PC-9 (cell line): ENCODE measurements at regions of chr12 and their contacts with region 1.

Region 1: GRCh38 chr12:47837190-47838171 is 17.8 kb upstream of the HDAC7 start:
- DNase-seq: peak; percentile 56 to 70
- H3K4me3 ChIP-seq: no peak overlapping the region
- H3K27ac ChIP-seq: no peak overlapping the region
- H3K4me1 ChIP-seq: peaks cover 35% of the 10 kb centered on the region
- H3K27me3 ChIP-seq: no peaks in the 10 kb centered on the region
- CTCF ChIP-seq: peak; percentile 97

Region 2: GRCh38 chr12:47742253-47742825 is 95.1 kb before region 1 on chr12:
- CTCF ChIA-PET with region 1: interaction called, 31 read pairs
- POLR2A ChIA-PET with region 1: no interaction called
- intact Hi-C with region 1: loop called (anchors 1 kb)
- DNase-seq: peak in 1 of 2 experiments; percentile 66
- H3K4me3 ChIP-seq: no peak overlapping the region
- H3K27ac ChIP-seq: no peak overlapping the region
- H3K4me1 ChIP-seq: peaks cover 8% of the 10 kb centered on the region
- H3K27me3 ChIP-seq: no peaks in the 10 kb centered on the region
- CTCF ChIP-seq: peak; percentile 100

Region 3: GRCh38 chr12:47779301-47779942 is 58.1 kb before region 1 on chr12:
- CTCF ChIA-PET with region 1: interaction called, 15 read pairs
- POLR2A ChIA-PET with region 1: interaction called, 7 read pairs
- intact Hi-C with region 1: loop called (anchors 1 kb)
- DNase-seq: peak; percentile 76 to 87
- H3K4me3 ChIP-seq: no peak overlapping the region
- H3K27ac ChIP-seq: no peak overlapping the region
- H3K4me1 ChIP-seq: peaks cover 62% of the 10 kb centered on the region
- H3K27me3 ChIP-seq: no peaks in the 10 kb centered on the region
- CTCF ChIP-seq: peak; percentile 96

Region 4: DNA sequence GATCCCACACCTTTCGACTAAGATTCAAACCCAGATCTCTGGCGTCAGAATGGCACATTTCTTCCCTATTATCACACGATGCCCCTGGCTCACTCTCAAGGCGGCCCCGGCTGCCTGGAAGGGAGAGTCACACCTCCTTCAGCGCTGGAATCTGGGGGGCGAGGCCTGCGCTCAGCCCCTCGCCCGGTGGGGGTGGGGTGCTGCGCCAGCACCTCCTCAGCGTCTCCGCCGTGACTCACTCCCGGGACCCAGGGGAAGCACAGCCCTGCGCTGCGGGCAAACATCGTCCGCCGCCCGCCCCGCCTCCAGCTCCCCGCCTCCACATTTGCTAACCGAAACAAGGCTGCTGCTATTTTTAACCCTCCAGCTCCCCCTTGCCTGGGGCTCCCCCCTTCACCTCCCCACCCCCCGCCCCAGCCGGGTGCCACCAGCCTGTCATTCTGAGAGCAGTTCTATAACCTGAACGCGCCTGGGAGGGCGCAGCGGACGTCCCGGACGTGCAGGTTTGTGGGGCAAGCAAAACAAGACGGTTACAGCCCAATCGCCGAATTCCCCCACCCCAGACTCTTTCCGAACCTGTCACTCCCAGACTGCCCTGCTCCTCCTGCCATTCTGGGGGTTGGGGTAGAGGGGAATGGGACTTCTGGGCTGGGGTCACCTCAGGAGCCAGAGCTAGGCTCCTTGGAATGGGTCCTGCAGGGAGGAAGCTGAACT is 24.5 kb before region 1 on chr12:
- CTCF ChIA-PET with region 1: interaction called, 13 read pairs
- POLR2A ChIA-PET with region 1: interaction called, 18 read pairs
- intact Hi-C with region 1: no loop called
- DNase-seq: peak; percentile 79 to 90
- H3K4me3 ChIP-seq: peak overlapping the region; percentile 40; the same call in 1 of the 2 replicates
- H3K27ac ChIP-seq: peak overlapping the region; percentile 60
- H3K4me1 ChIP-seq: peaks cover 58% of the 10 kb centered on the region
- H3K27me3 ChIP-seq: no peaks in the 10 kb centered on the region
- CTCF ChIP-seq: no peak

Region 5: GRCh38 chr12:47825239-47825639 is 12.2 kb before region 1 on chr12:
- CTCF ChIA-PET with region 1: interaction called, 5 read pairs
- POLR2A ChIA-PET with region 1: interaction called, 10 read pairs
- intact Hi-C with region 1: loop called (anchors 1 kb)
- DNase-seq: peak; percentile 80 to 88
- H3K4me3 ChIP-seq: no peak overlapping the region
- H3K27ac ChIP-seq: peak overlapping the region; percentile 71
- H3K4me1 ChIP-seq: peaks cover 95% of the 10 kb centered on the region
- H3K27me3 ChIP-seq: no peaks in the 10 kb centered on the region
- CTCF ChIP-seq: no peak

Region 6: GRCh38 chr12:48157018-48157888 is 319.8 kb after region 1 on chr12 and contains the start of gene ASB8:
- CTCF ChIA-PET with region 1: no interaction called
- POLR2A ChIA-PET with region 1: interaction called, 26 read pairs
- intact Hi-C with region 1: no loop called
- DNase-seq: peak; percentile 93 to 97
- H3K4me3 ChIP-seq: peak within 1 kb of the TSS; percentile 90
- H3K27ac ChIP-seq: no peak within 1 kb of the TSS; the same call in 1 of the 2 replicates
- H3K4me1 ChIP-seq: peaks cover 7% of the 10 kb centered on the region; the same call in 1 of the 2 replicates
- H3K27me3 ChIP-seq: no peaks in the 10 kb centered on the region
- CTCF ChIP-seq: peak; percentile 52
- total RNA-seq, gene ASB8: 21.8 and 25.1 TPM in 2 replicates